ENCODE measurements at regions of chr11 and their contacts with region 1.

Region 1: GRCh38 chr11:128905345-128906184 is 14.4 kb downstream of the KCNJ5 start:
- DNase-seq: peak; percentile 69
- H3K4me3 Mint-ChIP-seq: peak overlapping the region; percentile 72
- H3K27ac Mint-ChIP-seq: no peak overlapping the region
- H3K4me1 Mint-ChIP-seq: no peaks in the 10 kb centered on the region
- H3K27me3 Mint-ChIP-seq: no peaks in the 10 kb centered on the region
- CTCF ChIP-seq: peak; percentile 39

Region 2: DNA sequence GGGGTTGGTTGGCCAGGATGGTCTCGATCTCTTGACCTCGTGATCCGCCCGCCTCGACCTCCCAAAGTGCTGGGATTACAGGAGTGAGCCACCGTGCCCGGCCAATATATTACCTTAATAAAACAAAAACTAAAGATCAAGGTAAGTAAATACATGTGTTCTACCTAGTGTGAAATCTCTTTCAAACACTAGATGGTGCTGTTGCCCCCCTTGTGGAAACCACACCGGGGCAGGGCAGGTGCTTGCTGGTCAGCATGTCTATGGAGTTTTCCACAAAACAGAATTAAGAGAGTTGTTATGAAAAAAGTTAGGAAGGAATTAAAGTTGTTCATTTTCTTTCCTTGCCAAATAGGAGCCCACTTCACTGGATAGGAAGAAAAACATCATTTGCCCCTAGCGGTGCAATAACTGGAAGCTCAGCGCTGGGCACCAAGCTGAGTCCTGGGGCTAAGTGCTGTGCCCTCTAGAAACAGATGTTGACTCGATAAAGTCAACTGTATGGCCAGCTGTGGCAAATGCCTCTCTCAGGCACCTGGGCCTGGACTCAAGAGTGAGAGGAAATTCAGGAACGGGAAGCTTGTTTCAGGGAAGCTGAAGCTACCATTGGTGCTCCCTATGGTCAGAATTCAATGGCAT is 20.7 kb before region 1 on chr11:
- CTCF ChIA-PET with region 1: interaction called, 16 read pairs
- intact Hi-C with region 1: no loop called
- DNase-seq: peak; percentile 76
- H3K4me3 Mint-ChIP-seq: no peak overlapping the region
- H3K27ac Mint-ChIP-seq: no peak overlapping the region
- H3K4me1 Mint-ChIP-seq: peaks cover 10% of the 10 kb centered on the region
- H3K27me3 Mint-ChIP-seq: peaks cover 45% of the 10 kb centered on the region
- CTCF ChIP-seq: peak; percentile 56

Region 3: DNA sequence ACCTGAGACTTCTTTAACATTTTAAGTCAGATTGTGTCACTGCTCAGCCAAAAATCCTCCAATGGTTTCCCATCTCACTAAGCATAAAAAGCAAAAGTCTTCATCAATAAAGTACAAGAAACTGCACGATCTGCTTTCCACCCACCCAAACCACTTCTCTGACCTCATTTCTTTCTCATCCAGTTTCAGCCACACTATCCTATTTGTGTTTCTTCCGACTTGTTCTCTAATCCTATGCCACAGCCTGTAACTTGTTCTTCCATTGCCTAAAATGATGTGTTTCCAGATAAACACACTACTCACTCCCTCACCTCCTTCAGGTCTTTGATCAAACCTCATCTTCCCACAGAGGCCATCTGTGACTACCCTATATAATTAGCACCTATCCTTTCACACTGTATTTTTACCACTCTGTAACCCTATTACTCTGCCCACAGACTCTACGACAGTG is 258.2 kb after region 1 on chr11:
- CTCF ChIA-PET with region 1: no interaction called
- intact Hi-C with region 1: no loop called
- DNase-seq: no peak
- H3K4me3 Mint-ChIP-seq: no peak overlapping the region
- H3K27ac Mint-ChIP-seq: no peak overlapping the region
- H3K4me1 Mint-ChIP-seq: peaks cover 24% of the 10 kb centered on the region
- H3K27me3 Mint-ChIP-seq: no peaks in the 10 kb centered on the region
- CTCF ChIP-seq: no peak

Measured in Calu3 (cell line).